Head of caudate nucleus (tissue), 42 donors: ENCODE measurements at regions of chr7 and their contacts with region 1.

Region 1: DNA sequence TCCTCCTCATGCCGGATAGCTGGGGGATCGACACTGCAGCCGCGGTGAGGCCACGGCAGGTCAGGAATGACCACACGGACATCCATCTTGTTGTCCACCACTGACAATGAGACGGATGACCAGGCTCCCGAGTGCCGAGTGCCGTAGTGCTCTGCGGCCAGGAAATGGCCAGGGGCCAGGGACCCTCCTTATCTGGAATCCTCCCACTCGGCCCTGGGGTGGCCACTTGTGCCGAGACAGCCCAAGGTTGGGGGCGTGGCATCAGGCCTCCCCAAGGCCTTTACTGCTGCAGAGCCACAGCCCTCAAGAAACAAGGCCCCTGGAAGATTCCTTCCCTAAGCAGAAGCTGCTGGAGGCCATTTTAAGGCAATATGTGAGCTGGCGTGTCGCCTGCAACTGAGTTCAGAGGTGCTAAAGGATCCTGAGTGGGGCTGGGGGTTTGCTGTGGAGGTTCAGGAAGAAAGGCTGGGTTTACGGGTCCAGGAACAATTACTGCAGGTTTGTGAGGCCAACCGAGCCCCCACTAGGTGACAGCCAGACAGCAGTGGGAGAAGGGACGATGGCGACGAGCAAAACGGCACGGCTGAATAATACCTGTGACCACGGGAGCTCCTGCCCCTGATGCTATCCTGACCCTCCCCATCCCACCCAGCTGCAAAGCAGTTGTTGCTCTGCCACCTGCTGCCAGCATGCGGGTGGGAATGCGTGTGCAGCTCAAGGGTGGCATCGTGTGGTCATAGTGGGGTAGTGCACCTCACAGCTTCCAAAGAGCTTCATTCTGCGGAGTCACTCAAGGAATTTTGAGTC is 31.6 kb upstream of the LEP start:
- DNase-seq: peak; percentile 56 to 89 (median 78)

Region 2: GRCh38 chr7:127708788-127709187 is 500.6 kb before region 1 on chr7:
- intact Hi-C with region 1: loop called (anchors 2 kb)
- DNase-seq: peak in 41 of 42 donors; percentile 42 to 95 (median 83)

Region 3: DNA sequence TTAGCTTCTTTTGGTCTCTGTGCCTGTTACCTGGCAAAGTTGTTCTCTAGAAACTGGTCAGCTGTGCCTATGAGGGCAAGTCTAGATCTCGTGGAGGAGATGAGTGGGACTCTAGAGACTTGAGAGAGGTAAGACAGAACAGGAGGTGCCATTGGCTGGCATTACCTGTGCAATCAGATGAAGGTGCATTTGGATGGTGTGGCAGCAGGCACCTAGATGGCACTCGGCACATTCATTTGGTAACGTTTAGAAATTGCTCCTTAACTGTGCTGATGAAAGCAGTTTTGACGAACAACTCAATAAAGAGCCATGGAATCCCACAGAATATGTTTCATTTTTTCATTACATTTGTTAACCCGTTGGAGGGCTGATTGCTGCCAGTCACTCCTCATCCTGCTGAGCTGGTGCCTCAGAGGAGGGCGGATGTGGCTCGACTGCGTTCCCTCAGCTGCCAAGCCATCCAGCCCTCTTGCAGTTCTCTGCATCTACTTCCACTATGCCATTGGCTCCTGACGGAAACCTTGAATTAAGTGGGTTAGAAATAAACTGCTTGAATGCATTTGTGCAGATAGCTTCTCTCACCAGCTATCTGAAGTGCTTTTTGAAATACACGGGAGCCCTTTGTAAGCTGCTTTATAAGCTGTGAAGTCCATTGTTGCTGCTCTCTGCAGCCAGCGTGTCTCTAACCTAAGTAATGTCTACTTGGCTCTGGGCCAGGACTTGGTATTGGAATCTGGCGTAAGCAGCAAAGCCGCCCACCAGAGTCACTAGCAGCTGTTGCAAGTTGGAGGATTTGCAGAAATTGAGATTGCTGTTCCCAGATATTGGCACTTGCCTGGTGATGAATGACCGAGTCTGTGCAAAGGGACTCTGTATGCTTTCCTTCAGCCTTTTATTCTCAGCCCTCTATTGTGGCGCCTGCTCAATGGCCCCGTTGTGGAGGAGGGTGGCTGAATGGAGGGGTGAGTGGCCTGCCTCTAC is 265.6 kb before region 1 on chr7:
- intact Hi-C with region 1: loop called (anchors 10 kb)
- DNase-seq: peak; percentile 51 to 92 (median 78)

Region 4: GRCh38 chr7:128031901-128032604 is 177.4 kb before region 1 on chr7:
- intact Hi-C with region 1: loop called (anchors 5 kb)
- DNase-seq: peak in 38 of 42 donors; percentile 42 to 84 (median 63)

Region 5: DNA sequence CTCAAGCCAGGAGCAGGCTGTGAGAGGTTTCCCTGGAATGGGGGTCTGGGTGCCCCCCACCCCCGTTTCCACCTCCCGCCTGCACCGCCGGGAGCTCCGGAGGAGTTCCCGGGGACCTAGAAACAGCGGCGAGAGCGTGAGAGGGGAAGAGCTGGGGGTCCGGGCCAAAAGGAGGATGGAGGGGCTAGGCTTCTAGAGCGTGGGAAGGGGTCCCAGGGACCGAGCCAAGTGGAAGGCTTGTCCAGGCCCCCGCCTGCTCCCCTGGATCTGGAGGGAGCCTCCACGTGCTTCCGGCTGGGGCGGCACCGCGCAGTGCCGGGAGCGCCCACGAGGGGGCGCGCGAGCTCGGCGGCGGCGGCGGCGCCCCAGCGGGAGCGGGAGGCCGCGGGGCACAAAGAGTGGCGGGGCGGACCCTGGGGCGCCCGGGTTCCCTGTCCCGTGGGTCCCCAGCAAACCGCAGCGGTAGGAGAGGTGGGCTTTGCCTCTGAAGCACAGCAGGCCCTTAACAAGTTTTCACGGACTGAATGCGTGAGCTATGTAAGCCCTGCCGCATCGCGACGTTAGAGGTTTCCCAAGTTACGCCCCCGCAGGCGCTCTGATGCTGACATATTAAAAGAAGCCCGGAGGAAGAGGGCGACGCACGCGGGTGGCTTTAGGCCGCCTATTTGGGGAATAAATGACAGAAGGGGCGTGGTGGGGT is 73.8 kb before region 1 on chr7:
- intact Hi-C with region 1: loop called (anchors 2 kb)
- DNase-seq: peak in 41 of 42 donors; percentile 22 to 84 (median 65)